ENCODE measurements at regions of chr1 and their contacts with region 1.

Region 1: GRCh38 chr1:1231400-1232223 is at the start of gene SDF4:
- DNase-seq: peak; percentile 97
- H3K4me3 Mint-ChIP-seq: peak within 1 kb of the TSS; percentile 86
- H3K27ac Mint-ChIP-seq: peak within 1 kb of the TSS; percentile 86
- H3K4me1 Mint-ChIP-seq: peaks cover 35% of the 10 kb centered on the region
- H3K27me3 Mint-ChIP-seq: no peaks in the 10 kb centered on the region
- total RNA-seq, gene SDF4: 74.7 to 79.5 TPM

Region 2: DNA sequence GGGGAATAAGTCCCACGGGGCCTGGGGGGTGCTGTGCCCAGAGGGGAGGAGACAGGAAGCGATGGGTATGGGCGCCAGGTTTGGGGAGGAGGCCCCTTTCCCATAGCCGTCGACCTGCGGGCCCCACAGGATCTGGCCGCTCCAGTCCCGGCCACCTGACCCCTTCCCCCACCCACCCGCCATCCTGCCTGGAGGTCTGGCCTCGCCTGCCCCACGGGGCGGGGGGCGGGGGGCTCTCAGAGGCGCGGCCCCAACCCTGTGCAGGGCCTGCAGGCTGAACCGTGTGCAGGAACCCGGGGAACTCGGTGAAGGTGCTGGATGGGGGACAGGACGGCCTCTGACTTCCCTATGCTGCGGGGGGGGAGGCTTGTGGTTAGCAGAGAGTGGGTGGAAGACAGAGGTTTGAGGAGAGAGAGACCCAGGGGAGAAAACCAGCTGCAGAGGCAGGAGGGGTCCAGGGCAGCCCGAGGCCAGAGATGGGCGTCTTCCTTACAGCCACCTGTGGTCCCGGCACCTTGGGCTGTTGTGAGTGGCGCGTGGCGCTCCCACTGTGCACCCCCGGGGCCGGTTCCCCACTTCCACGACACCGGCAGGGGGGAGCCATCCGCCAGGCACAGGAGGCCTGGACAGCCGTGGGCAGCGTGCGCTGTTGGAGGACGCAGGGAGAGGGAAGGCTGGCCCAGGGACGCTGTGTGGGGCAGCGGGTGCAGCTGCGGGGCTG is 22.7 kb before region 1 on chr1:
- CTCF ChIA-PET with region 1: no interaction called
- intact Hi-C with region 1: loop called (anchors 2 kb)
- DNase-seq: peak; percentile 66
- H3K4me3 Mint-ChIP-seq: peak overlapping the region; percentile 80
- H3K27ac Mint-ChIP-seq: peak overlapping the region; percentile 89
- H3K4me1 Mint-ChIP-seq: peaks cover 34% of the 10 kb centered on the region
- H3K27me3 Mint-ChIP-seq: no peaks in the 10 kb centered on the region

Region 3: DNA sequence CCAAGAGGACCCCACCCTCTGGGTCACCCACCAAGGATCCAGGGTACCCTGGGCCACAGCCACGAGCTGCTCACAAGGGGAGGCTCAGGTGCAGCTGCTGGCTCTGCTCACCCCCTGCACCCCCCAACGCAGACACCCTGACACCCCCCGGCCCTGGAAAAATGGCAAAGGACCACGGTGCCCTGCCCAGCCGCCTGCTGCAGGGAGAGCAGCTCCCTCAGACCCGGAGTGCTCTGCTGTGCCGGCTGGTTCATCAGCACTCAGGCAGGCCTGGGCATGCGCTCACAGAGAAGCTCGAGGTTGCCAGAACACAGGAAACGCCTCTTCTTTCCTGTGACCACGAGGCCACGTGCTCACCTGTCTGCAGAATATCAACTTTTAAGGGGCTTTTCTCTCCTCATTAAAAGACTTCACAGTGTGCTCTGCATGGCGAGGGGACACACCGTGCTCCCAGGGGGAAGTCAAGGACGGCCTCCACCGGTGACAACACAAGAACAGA is 19.2 kb after region 1 on chr1:
- CTCF ChIA-PET with region 1: no interaction called
- intact Hi-C with region 1: loop called (anchors 2 kb)
- DNase-seq: peak; percentile 91
- H3K4me3 Mint-ChIP-seq: peak overlapping the region; percentile 10
- H3K27ac Mint-ChIP-seq: peak overlapping the region; percentile 85
- H3K4me1 Mint-ChIP-seq: peaks cover 22% of the 10 kb centered on the region
- H3K27me3 Mint-ChIP-seq: peaks cover 2% of the 10 kb centered on the region

Region 4: GRCh38 chr1:1273512-1274298 is 42.1 kb after region 1 on chr1 and contains the start of gene UBE2J2:
- CTCF ChIA-PET with region 1: no interaction called
- intact Hi-C with region 1: loop called (anchors 2 kb)
- DNase-seq: peak; percentile 95
- H3K4me3 Mint-ChIP-seq: peak within 1 kb of the TSS; percentile 85
- H3K27ac Mint-ChIP-seq: peak within 1 kb of the TSS; percentile 80
- H3K4me1 Mint-ChIP-seq: peaks cover 39% of the 10 kb centered on the region
- H3K27me3 Mint-ChIP-seq: no peaks in the 10 kb centered on the region
- total RNA-seq, gene UBE2J2: 48.5 to 49.7 TPM

Measured in activated naive CD4-positive, alpha-beta T cell treated with anti-CD3 and anti-CD28 coated beads for 36 hours (primary cell).